ENCODE measurements at regions of chr5 and their contacts with region 1.

Region 1: DNA sequence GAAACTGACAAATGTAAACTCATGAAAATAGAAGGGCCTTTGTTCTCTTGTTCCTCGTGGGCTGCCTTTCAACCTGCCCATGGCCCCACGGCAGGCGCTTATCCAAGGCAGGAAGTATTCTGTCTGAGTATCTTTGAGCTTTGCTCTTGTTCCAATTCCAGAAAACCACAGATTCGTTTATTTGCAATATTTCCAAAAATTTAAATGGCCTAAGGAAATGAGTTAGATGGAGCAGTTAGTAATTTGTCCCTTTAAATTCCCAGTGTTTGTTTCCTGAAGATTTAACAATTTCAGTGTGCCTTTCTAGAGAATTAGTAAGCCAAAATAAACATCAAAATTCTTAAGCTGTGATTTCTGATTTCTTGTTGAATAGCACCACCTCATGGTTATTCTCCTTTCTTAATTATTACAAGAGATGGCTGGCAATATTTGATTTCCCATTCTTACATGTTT is 299.4 kb upstream of the RASA1 start:
- DNase-seq: no peak
- ATAC-seq: peak; percentile 33
- H3K4me3 ChIP-seq: no peak overlapping the region
- H3K27ac ChIP-seq: no peak overlapping the region
- H3K4me1 ChIP-seq: no peaks in the 10 kb centered on the region
- H3K27me3 ChIP-seq: no peaks in the 10 kb centered on the region

Region 2: DNA sequence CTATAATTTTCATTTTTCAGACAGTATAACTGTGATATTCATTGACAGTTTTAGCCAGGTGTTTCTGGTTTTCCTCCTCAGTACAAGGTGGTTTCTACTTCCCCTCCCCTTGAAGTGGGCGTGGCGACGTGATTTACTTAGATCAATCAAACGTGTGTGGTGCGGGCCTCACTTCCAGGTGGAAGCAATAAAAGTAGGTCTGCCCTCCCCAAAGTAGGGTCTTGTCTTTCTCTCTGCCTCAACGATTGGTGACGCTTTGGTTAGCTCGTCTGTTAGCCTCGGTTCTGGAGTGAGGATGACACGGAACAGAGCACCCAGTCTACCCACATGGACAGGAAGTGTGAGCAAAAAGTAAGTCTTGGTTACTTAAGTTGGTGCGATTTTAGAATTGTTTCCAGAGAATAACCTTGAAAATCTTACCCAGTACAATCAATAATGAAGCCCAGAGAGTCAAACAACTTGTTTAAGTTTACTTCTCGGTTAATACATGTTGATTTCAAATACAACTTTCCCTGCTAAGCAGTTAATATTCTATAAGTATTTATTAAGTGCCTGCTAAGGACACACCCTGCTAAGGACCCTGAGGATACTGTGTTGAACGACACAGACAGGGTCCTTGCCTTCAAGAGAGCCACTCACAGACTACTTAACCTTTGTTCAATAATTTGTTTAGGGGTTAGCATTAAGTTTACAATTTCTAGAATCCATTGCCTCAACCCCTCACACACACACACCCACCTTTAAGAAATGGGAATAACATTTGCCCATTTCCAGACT is 302.2 kb before region 1 on chr5:
- intact Hi-C with region 1: no loop called
- DNase-seq: no peak
- ATAC-seq: no peak
- H3K4me3 ChIP-seq: no peak overlapping the region
- H3K27ac ChIP-seq: no peak overlapping the region
- H3K4me1 ChIP-seq: no peaks in the 10 kb centered on the region
- H3K27me3 ChIP-seq: no peaks in the 10 kb centered on the region

Region 3: GRCh38 chr5:87103596-87104287 is 135.4 kb after region 1 on chr5:
- intact Hi-C with region 1: no loop called
- DNase-seq: no peak
- ATAC-seq: no peak
- H3K4me3 ChIP-seq: no peak overlapping the region
- H3K27ac ChIP-seq: no peak overlapping the region
- H3K4me1 ChIP-seq: no peaks in the 10 kb centered on the region
- H3K27me3 ChIP-seq: no peaks in the 10 kb centered on the region

Region 4: DNA sequence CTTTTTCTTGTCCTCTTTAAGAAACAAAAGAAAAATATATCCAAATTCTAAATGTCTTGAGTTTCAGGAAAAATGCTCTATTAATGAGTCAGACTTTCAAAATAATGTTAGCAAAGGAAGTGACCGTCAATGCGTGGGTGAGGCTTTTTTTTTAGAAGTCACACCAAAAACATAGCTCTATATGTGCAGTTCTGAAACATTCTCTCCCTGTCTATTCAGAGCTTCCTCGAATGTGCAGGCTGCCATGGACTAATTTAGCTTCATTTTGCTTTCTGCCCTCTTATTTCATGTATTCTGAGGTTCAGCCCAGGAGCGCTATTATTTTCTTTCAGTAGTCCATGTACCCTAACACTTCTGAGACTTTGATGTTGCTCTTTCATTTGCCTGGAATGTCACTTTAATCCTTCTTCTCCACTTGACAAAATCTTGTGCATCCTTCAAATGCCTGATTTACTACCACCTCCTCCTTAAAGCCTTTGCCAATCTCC is 226.8 kb after region 1 on chr5:
- intact Hi-C with region 1: no loop called
- DNase-seq: no peak
- ATAC-seq: no peak
- H3K4me3 ChIP-seq: no peak overlapping the region
- H3K27ac ChIP-seq: peak overlapping the region; percentile 71 to 91
- H3K4me1 ChIP-seq: peaks cover 0 to 6% of the 10 kb centered on the region in 2 donors
- H3K27me3 ChIP-seq: no peaks in the 10 kb centered on the region

Region 5: DNA sequence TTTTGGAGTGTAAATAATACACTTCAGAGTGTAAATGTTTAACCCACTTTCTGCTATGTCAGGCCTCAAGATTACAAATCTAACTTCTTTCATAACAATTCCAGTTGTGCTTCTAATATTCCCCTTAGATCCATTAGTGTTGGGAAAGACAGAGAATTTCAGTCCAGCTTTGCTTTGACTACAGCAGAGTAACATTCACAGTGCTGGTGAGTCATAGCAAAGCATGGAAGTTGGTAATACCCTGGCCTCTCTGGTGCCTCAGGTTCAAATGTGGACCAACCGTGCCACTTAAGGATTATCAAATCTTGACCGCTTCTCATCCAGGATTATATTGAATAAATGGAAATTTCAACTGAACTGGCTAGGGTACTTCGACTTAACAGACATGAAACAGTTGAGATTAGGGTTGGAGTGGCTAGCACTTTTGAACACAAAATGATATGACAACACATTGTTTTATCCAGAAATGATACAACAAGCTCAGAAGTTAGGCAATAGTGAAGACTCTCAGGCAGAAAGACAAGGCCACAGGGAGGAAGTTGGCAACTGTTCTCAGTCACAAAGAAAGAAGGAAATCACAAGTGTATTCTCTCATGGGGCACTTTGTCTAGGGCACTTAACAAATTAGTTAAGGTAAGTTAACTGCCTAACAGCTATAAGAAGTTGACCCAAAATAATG is 275.0 kb after region 1 on chr5:
- intact Hi-C with region 1: loop called in 1 of 2 experiments (anchors 5 kb)
- DNase-seq: no peak
- ATAC-seq: peak; percentile 85
- H3K4me3 ChIP-seq: no peak overlapping the region
- H3K27ac ChIP-seq: no peak overlapping the region
- H3K4me1 ChIP-seq: no peaks in the 10 kb centered on the region
- H3K27me3 ChIP-seq: no peaks in the 10 kb centered on the region

Measured in aorta (tissue), 5 donors.